ENCODE measurements at regions of chr9 and their contacts with region 1.

Region 1: GRCh38 chr9:136625101-136626060 is 37.3 kb upstream of the EGFL7 start:
- DNase-seq: peak; percentile 69
- ATAC-seq: peak; percentile 20
- H3K4me3 ChIP-seq: peak overlapping the region in 1 of 3 experiments; percentile 25; a peak in 1 of 6 replicates
- H3K27ac ChIP-seq: no peak overlapping the region
- H3K4me1 ChIP-seq: peaks cover 54% of the 10 kb centered on the region
- H3K27me3 ChIP-seq: peaks cover 42 to 90% of the 10 kb centered on the region in 2 experiments; a peak in 4 of 5 replicates
- CTCF ChIP-seq: peak; percentile 71
- EP300 ChIP-seq: 0 out of 4 replicates have a peak, but pooled peaks of 1 of the 2 experiments have one; percentile 13
- POLR2A ChIP-seq: no peak
- RAD21 ChIP-seq: peak; percentile 39; the same call in 1 of the 2 replicates

Region 2: DNA sequence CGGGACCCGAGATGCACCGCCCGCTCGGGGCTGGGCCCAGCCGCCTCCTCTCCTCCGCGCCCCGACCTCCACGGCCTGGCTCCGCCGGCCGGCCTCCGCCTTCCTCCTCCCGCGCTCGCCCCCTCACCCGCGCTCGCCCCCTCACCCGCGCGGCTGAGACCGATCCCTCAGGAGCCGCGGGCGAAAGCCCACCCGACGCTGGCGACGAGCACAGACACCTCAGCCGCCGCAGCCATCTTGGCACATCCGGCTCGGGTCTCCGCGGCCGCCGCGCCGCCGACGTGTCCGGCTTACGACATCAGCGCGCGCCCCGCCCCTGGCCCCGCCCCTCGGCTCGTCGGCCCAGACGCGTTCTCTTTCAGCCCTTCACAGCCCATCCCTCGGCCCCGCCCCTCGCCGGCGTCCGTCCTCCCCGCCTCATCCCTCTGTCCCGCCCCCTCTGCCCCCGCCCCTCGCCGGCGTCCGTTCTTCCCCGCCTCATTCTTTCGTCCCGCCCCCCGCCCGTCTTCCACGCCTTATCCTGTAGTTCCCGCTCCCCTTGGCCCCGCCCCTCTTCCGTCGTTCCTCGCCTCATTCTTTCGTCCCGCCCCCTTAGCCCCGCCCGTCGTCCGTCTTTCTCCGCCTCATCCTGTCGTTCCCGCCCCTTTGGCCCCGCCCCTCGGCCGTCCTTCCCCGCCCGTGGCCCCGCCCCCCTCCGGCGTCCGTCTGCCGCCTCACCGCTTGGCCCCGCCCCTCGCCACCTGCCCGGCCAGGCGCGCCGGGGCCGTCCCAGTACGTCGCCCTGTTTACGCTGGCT is 142.4 kb before region 1 on chr9 and contains the start of gene SEC16A:
- CTCF ChIA-PET with region 1: interaction called, 101 read pairs
- POLR2A ChIA-PET with region 1: interaction called, 25 read pairs
- in situ Hi-C with region 1: no loop called
- intact Hi-C with region 1: loop called (anchors 1 kb)
- DNase-seq: peak; percentile 89
- ATAC-seq: peak; percentile 43
- H3K4me3 ChIP-seq: peak within 1 kb of the TSS; percentile 79 to 98 (median 87)
- H3K27ac ChIP-seq: peak within 1 kb of the TSS; percentile 100
- H3K4me1 ChIP-seq: peaks cover 42% of the 10 kb centered on the region
- H3K27me3 ChIP-seq: peaks cover 14 to 21% of the 10 kb centered on the region in 2 experiments; a peak in 3 of 5 replicates
- CTCF ChIP-seq: no peak
- EP300 ChIP-seq: 0 out of 4 replicates have a peak, but pooled peaks of 1 of the 2 experiments have one; percentile 15
- POLR2A ChIP-seq: peak in 1 of 2 experiments; percentile 82; a peak in 2 of 4 replicates
- RAD21 ChIP-seq: peak; percentile 65
- total RNA-seq, gene SEC16A: 15.9 and 27.7 TPM in 2 replicates

Region 3: GRCh38 chr9:136671646-136672430 is 46.5 kb after region 1 on chr9:
- CTCF ChIA-PET with region 1: no interaction called
- POLR2A ChIA-PET with region 1: no interaction called
- in situ Hi-C with region 1: no loop called
- intact Hi-C with region 1: no loop called
- DNase-seq: no peak
- ATAC-seq: peak; percentile 56
- H3K4me3 ChIP-seq: peak overlapping the region in 1 of 3 experiments; percentile 40; a peak in 2 of 6 replicates
- H3K27ac ChIP-seq: no peak overlapping the region
- H3K4me1 ChIP-seq: peaks cover 50% of the 10 kb centered on the region
- H3K27me3 ChIP-seq: peaks cover 12 to 37% of the 10 kb centered on the region in 2 experiments; a peak in 3 of 5 replicates
- CTCF ChIP-seq: peak; percentile 85
- EP300 ChIP-seq: no peak
- POLR2A ChIP-seq: no peak
- RAD21 ChIP-seq: no peak